A673 (cell line): ENCODE measurements at regions of chr17 and their contacts with region 1.

Region 1: DNA sequence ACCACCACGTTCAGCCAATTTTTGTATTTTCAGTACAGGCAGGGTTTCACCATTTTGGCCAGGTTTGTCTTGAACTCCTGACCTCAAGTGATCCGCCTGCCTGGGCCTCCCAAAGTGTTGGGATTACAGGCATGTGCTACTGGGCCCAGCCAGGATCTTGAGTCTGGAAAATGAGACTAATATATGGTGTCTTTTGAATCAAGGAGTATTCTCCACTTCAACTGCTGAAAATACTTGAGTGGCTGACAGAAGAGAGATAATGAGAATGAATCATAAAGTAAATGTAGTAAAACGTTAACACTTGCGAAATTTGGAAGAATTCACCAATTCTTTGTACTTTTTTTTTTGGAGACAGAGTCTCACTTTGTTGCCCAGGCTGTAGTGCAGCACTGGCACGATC is 16.6 kb downstream of the SMYD4 start:
- DNase-seq: no peak
- H3K4me3 ChIP-seq: no peak overlapping the region
- H3K27ac ChIP-seq: no peak overlapping the region
- H3K4me1 ChIP-seq: peaks cover 5% of the 10 kb centered on the region
- H3K27me3 ChIP-seq: no peaks in the 10 kb centered on the region
- CTCF ChIP-seq: no peak

Region 2: DNA sequence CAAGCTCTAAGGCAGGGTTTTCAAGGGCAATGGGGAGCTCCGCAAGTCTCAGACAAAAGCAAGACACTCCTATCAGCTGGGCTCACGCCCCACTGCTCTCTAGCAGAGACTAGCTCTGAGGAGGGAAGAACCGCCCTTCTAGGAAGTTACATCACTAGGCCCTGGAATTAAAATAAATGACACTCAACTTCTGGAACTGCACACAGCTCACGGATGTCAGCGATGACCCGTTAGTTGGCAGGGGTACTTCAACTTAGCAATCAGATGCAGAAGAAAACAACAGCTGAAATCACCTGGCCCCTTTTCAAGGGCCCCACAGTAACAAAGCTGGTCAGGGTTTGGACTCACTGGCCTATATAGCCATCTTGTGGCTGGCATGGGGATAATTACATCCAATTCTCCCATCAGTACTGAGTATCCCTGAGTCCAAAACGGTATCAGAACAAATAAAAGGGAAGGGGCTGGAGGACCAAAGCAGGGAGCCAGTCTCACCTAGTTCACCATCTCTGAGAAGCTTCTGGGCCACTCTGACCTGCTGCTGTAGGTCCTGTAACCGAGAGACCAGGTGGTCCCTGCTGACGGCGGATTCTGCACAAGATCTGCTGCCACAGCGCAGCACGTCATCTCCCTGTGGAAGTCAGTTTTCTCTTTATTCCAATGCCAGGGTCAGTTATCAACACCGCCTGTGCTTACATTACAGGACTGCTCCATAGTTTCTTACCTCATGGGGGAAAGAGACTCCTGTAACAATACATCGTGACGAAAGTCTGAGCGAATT is 29.1 kb before region 1 on chr17:
- CTCF ChIA-PET with region 1: no interaction called
- POLR2A ChIA-PET with region 1: interaction called, 12 read pairs
- intact Hi-C with region 1: no loop called
- DNase-seq: peak; percentile 57
- H3K4me3 ChIP-seq: no peak overlapping the region
- H3K27ac ChIP-seq: peak overlapping the region; percentile 46
- H3K4me1 ChIP-seq: peaks cover 26% of the 10 kb centered on the region
- H3K27me3 ChIP-seq: no peaks in the 10 kb centered on the region
- CTCF ChIP-seq: peak; percentile 67